GM10248 (cell line): ENCODE measurements at regions of chr1 and their contacts with region 1.

Region 1: DNA sequence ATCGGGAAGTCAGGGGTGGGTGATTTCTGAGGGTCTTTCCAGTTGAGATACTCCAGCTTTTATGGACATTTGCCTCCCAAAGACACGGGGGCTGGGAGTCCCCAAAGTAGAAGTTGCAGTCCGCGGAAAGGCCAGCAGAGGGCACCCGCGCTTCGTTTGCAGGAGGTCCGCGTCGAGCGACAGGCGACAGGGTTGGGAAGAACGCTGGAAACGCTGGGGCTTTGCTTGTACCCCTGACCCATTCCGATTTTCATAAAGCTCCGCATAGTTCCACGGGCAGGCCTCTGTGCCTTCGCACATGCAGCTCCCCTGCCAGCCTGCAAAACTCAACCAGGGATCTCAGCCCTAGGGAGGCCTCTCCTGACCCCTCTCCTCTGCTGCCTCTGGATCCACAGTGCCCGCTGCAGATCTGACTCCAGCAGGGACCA is 44.2 kb upstream of the LAPTM5 start:
- DNase-seq: peak; percentile 76
- CTCF ChIP-seq: peak; percentile 97

Region 2: DNA sequence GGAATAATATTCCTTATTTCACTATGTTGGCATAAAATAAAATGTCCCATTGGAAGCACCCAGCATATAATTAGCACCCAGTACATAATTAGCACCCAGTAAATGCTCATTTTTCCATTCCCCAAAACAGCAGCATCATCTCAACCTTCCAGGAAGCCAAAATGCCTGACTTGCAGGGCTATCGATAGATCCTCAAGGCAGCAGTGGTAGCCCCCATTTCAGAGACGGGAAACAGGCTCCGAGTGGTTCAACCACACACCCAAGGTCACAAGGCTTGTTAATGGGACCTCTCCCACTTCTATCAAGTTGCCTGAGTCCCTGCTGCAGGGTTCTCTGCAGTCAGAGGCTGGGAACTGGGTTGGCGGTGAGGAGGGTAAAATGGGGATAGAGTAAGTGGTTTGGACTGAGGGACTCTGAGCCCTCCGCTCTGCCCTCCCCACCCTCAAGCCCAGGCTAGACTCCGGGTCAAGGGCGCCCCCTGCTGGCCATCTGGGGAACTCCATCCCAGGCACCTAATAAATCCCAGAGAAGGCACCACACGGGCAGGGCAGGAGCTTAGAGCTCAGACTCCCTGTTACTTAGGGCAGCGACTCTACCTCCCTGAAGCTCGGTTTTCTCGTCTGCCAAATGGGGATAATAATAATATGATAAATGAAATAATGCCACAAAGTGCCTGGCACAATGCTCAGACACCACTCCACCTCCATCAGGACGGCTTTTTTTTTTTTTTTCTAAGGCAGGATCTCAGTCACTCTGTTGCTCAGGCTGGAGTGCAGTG is 22.3 kb before region 1 on chr1:
- CTCF ChIA-PET with region 1: interaction called, 62 read pairs
- POLR2A ChIA-PET with region 1: no interaction called
- DNase-seq: peak; percentile 87
- CTCF ChIP-seq: peak; percentile 95

Region 3: DNA sequence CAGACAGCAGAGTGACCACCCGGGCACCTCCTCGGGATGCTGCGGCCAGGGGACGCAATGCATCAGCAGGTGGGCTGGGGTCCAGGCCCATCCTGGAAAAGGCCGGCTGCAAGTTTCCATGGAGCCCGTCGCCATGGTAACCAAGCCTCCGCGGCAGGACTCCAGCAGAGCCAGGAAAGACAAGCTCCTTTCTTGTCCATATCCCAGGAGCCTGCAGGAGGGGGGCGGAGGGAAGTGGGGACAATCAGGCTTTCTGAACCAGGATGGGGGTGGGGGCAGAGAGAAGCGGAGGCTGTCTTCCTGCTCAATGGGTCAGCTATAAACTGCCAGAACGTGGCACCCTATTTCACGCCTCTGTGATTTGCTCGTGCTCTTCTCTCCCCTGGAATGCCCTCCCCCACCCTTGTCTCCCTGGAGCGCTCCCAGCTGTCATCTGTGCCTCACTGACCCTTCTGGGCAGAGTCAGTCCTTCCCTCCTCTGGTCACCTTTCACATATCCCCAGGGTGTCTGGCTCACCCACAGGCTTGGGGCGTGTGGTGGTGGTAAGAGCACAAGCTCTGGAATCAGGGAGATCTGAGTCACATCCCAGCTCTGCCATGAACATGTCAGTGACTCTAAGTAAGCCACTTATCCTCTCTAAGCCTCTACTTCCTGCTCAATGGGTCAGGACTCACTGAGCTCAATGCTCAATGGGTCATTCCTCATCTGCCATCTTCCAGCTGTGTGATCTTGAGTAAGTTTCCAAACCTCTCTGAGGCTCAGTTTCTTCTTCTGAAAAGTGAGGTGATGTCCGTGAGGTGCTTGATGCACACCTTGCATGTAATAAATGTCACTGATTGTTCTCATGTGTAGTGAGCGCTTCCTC is 14.7 kb after region 1 on chr1:
- CTCF ChIA-PET with region 1: interaction called, 37 read pairs
- POLR2A ChIA-PET with region 1: no interaction called
- DNase-seq: no peak
- CTCF ChIP-seq: no peak

Region 4: GRCh38 chr1:30888391-30888790 is 86.6 kb after region 1 on chr1:
- CTCF ChIA-PET with region 1: interaction called, 12 read pairs
- POLR2A ChIA-PET with region 1: no interaction called
- DNase-seq: no peak
- CTCF ChIP-seq: no peak

Region 5: DNA sequence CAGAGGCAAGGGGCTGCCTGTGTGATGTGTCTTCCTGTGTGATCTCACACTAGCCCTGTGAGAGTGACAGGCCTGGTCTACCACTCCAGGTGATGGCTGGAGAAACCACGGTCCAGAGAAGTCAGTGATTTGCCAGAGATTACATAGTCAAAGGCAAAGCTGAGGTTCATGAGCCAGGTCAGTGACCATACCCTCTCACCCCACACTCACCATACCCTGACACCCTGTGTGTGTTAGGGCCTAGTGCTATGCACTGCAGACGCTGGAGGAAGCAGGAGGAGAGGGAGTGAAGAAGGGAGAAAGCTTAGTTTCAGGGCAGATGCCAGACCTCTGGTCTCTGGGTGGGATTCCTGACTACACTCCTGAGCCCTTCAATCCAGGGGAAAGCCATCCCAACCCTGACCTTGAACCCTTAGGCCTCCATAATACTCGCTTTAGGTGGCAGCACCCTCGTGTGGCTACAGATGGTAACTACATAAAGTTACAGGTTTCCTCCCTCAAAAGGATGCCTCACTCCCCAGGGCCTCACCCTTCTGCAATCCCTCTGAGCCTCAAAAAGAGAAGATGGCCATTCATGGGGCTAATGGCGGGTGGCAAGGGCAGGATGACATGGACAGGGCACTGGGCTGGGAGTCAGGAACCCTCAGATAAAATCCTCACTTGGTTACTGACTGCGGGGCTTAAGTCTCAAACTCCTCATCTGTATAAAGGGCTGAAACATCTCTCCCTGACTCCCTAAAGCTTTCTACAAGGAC is 127.5 kb after region 1 on chr1:
- CTCF ChIA-PET with region 1: interaction called, 245 read pairs
- POLR2A ChIA-PET with region 1: no interaction called
- DNase-seq: peak; percentile 68
- CTCF ChIP-seq: peak; percentile 76